Transverse colon (tissue), 4 donors: ENCODE measurements at regions of chr15 and their contacts with region 1.

Region 1: GRCh38 chr15:52139599-52140491 is 27.3 kb upstream of the BCL2L10 start:
- DNase-seq: peak; percentile 83
- H3K4me3 ChIP-seq: no peak overlapping the region
- H3K27ac ChIP-seq: no peak overlapping the region
- H3K4me1 ChIP-seq: peaks cover 17 to 29% (median 21%) of the 10 kb centered on the region in 4 donors
- H3K27me3 ChIP-seq: no peaks in the 10 kb centered on the region
- CTCF ChIP-seq: peak; percentile 76 to 83 (median 81)
- EP300 ChIP-seq: no peak
- POLR2A ChIP-seq: no peak

Region 2: GRCh38 chr15:51658670-51659069 is 481.2 kb before region 1 on chr15:
- in situ Hi-C with region 1: no loop called
- intact Hi-C with region 1: no loop called
- DNase-seq: no peak
- H3K4me3 ChIP-seq: no peak overlapping the region
- H3K27ac ChIP-seq: no peak overlapping the region
- H3K4me1 ChIP-seq: no peaks in the 10 kb centered on the region
- H3K27me3 ChIP-seq: no peaks in the 10 kb centered on the region
- CTCF ChIP-seq: no peak
- EP300 ChIP-seq: no peak
- POLR2A ChIP-seq: no peak

Region 3: GRCh38 chr15:51971375-51972133 is 168.3 kb before region 1 on chr15 and contains the start of gene LEO1:
- in situ Hi-C with region 1: loop called in 2 of 4 experiments (anchors 10 to 25 kb)
- intact Hi-C with region 1: no loop called
- DNase-seq: peak; percentile 92
- H3K4me3 ChIP-seq: peak within 1 kb of the TSS; percentile 63 to 95 (median 72)
- H3K27ac ChIP-seq: peak within 1 kb of the TSS; percentile 90 to 93 (median 91)
- H3K4me1 ChIP-seq: peaks cover 6 to 19% (median 15%) of the 10 kb centered on the region in 4 donors
- H3K27me3 ChIP-seq: no peaks in the 10 kb centered on the region
- CTCF ChIP-seq: peak; percentile 20 to 63 (median 36)
- EP300 ChIP-seq: no peak
- POLR2A ChIP-seq: peak; percentile 72
- total RNA-seq, gene LEO1: 27.2 to 38.2 (median 30.9) TPM

Region 4: DNA sequence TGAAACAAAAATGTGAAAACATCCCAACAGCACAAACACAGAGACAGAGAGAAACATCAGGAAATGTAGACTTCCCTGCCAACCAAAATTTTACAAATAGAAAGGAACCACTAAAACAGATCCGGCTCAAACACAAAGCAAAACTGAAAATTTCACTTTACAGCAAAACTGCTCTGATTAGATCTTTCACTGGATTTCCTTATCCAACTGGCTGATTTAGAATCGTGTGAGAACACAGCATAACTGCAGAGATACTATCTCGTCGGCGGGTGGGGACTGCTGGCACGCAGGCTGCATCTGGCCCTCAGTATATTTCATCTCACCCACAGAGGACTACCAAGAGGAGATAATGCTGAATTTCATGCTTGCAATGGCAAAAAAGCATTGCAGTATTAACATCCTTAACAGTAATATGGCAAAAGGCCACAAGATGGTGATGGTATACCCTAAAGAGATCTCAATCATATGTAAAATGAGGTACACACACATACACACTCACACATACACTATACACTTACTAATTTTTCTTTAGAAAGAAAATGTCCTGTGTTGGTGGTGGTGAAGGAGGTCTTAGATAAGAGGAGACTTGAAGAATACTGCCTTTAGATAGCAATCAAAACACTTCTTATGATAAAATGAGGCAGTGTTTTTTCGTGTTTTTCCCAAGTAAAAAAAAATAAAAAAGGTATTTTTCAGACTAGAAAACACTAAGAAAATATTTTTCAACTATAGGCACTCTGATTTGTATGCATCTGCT is 157.7 kb before region 1 on chr15:
- in situ Hi-C with region 1: loop called in 2 of 4 experiments (anchors 10 to 25 kb)
- intact Hi-C with region 1: no loop called
- DNase-seq: no peak
- H3K4me3 ChIP-seq: peak overlapping the region in 2 of 4 donors; percentile 1 to 14
- H3K27ac ChIP-seq: peak overlapping the region; percentile 66 to 83 (median 77)
- H3K4me1 ChIP-seq: peaks cover 8 to 25% (median 14%) of the 10 kb centered on the region in 4 donors
- H3K27me3 ChIP-seq: no peaks in the 10 kb centered on the region
- CTCF ChIP-seq: peak; percentile 32 to 79 (median 43)
- EP300 ChIP-seq: no peak
- POLR2A ChIP-seq: no peak

Region 5: GRCh38 chr15:52050416-52050815 is 89.4 kb before region 1 on chr15:
- in situ Hi-C with region 1: no loop called
- intact Hi-C with region 1: no loop called
- DNase-seq: no peak
- H3K4me3 ChIP-seq: no peak overlapping the region
- H3K27ac ChIP-seq: no peak overlapping the region
- H3K4me1 ChIP-seq: peaks cover 0 to 16% (median 3%) of the 10 kb centered on the region in 4 donors
- H3K27me3 ChIP-seq: no peaks in the 10 kb centered on the region
- CTCF ChIP-seq: no peak
- EP300 ChIP-seq: no peak
- POLR2A ChIP-seq: no peak

Region 6: DNA sequence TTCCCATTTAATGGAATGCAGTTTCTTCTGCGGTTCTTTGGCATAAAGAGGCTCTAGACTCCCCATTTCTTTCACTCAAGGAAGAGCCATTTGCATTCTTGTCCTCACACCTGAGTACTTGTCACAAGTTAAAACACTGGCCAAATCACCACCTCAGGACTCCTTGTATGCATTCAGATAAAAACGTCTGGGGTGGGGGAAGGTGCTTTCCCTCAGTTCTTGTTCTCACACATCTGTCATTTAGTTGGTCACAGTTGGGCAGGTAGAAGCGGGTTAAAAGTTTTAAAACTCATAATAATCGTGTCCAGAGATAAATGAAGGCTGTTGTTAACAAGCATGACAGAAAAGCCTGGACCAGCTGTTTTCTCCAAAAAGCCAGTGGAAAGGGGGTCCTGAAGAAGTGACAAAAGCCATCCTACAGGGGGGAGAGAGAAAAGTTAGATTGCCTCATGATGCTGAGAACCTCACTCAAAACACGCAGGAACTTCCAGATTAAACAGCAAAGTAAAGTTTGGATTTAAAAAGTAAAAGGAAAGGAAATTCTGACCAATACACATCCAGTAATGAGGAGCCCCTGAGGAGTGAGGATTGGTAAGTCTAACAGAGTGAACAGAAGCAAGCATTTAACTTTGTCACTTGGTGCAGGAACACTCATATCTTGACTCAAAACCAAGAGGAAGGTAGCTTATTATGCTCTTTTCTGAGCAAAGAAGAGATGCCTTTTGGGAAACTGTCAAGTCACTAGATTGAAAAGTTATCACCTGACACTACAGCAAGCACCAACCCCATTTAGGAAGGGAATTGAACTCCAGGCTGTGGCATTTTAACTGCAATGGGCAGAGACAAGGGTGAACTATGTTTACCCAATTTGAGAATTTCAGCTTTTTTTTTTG is 30.0 kb before region 1 on chr15:
- in situ Hi-C with region 1: no loop called
- intact Hi-C with region 1: loop called (anchors 2 kb)
- DNase-seq: no peak
- H3K4me3 ChIP-seq: no peak overlapping the region
- H3K27ac ChIP-seq: no peak overlapping the region
- H3K4me1 ChIP-seq: peaks cover 0 to 14% (median 12%) of the 10 kb centered on the region in 4 donors
- H3K27me3 ChIP-seq: peaks cover 38% of the 10 kb centered on the region
- CTCF ChIP-seq: no peak
- EP300 ChIP-seq: no peak
- POLR2A ChIP-seq: no peak

Region 7: DNA sequence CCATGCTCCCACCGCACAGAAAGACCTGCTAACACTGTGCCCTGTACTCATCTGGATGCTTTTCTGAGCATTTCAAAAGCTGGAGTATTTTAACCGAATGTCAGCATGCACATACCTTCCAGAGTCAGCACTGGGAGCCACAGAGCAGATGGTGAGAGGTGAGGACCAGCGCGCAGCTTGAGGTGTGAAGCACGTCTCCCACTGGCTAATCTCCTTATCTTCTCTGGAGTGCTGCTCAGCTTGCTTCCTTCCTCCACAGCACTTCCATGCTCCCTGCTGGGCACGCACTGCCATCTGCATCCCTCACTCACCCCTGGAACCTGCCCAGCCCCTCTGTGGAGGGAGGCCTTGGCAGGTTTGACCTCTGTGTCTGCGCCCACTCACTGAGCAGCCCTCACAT is 51.4 kb after region 1 on chr15 and contains the start of gene GNB5:
- in situ Hi-C with region 1: loop called in 1 of 4 experiments (anchors 10 kb)
- intact Hi-C with region 1: no loop called
- DNase-seq: no peak
- H3K4me3 ChIP-seq: no peak within 1 kb of the TSS
- H3K27ac ChIP-seq: no peak within 1 kb of the TSS
- H3K4me1 ChIP-seq: no peaks in the 10 kb centered on the region
- H3K27me3 ChIP-seq: no peaks in the 10 kb centered on the region
- CTCF ChIP-seq: no peak
- EP300 ChIP-seq: no peak
- POLR2A ChIP-seq: no peak
- total RNA-seq, gene GNB5: 0.60 to 12.7 (median 7.8) TPM